Head of caudate nucleus (tissue), 42 donors: ENCODE measurements at regions of chr1 and their contacts with region 1.

Region 1: GRCh38 chr1:204072931-204073836 is at the start of gene SOX13:
- DNase-seq: peak; percentile 73 to 95 (median 88)

Region 2: GRCh38 chr1:203871107-203871875 is 201.9 kb before region 1 on chr1:
- intact Hi-C with region 1: no loop called
- DNase-seq: peak in 39 of 42 donors; percentile 16 to 83 (median 57)

Region 3: DNA sequence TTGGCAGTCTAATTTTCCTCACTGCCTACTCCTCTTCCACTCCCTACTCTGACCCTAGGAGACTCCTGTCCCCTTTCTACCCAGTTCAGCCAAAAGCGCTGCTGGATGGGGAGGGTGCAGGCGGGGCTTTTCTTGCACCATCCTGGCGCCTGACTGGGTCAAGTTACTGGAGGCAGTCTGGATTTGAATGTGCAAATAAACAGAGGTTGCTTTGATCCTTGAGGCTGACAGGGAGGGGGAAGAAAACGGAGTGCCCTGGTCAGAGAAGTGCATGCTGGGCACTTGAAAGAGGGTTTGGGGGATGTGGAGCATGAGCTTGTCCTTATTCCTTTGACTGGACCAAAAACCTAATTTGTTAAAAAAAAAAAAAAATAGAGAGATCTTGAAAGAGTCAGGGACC is 77.1 kb before region 1 on chr1:
- intact Hi-C with region 1: loop called (anchors 2 kb)
- DNase-seq: peak in 41 of 42 donors; percentile 8 to 80 (median 53)

Region 4: GRCh38 chr1:204104133-204104871 is 31.1 kb after region 1 on chr1:
- intact Hi-C with region 1: no loop called
- DNase-seq: no peak

Region 5: DNA sequence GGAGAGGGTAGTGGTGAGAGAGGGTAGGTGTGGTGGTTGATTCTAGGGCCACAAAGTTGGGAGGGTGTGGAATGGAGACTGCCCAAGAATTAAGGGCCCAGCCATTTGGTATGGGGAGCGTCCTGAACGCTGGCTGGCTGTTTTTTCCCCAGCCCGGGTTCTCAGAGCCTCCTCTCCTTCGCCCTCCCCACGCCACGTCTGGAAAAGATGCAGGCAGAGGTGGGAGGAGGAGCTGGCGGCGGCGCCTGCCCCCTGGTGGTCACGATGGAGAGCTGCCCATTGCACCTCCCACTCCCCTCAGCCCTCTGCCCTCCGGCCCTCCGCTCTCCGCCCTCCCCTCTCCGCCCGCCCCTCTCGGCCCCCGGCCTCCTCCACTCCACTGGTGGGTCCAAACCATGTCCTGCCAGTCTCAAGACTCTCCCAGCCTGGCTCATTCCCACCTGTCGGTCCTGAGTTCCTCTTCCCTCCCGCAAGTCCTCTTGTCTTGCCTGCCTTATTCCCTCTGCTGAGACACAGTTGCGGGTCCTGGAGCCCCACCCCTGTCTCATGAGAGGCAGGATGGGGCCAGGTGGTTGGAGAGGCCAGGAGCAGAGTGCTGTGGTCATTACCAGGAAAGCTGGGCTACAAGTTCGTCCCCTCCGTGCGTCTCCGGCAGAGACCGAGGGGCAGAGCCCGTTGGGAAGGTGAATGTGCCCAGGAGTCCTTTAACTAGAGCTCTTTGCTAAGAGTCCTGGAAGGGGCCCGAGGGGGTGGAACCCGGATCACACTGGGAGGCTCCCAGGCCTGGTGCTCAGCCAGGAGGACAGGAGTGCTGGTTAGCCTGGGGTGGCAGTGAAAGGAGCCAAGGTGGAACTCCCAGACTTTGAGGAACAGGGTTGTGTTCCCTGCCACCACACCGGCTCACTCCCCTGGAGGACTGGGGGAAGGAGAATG is 56.0 kb after region 1 on chr1:
- intact Hi-C with region 1: loop called (anchors 5 kb)
- DNase-seq: peak in 41 of 42 donors; percentile 49 to 88 (median 74)